ENCODE measurements at regions of chr14 and their contacts with region 1.

Region 1: DNA sequence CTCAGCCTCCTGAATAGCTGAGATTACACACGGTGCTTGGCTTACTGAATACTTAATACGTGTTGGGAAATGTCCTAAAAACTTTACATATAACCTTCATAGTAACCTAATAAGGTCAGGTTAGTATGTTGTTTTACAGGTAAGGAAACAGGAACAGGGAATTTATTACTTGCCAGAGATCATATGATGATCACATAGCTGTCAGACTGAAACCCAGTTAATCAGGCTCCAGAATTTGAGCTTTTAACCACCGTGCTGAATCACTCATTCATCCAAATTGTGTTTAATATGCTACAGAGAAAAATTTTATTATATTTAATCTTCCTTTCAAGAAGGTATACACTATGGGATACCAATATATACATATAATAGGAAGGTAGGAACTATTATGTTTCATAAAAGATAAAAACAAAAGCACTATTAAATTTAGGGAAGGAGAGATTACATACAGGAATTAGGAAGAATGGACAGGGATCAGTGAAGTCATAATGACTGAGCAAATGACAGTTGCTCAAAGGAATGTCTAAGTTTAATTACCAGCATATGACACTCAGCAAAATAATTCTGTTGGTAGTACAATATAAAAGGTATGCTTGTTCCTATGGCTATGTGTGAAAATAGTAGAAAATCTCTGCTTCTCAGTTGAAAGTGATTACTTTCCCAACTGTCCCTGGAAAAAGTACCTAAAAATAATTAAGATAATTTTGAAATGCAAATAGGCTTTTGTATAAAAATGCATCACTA is 59.3 kb downstream of the HEATR5A start:
- DNase-seq: no peak
- CTCF ChIP-seq: no peak

Region 2: GRCh38 chr14:30988509-30988908 is 372.6 kb before region 1 on chr14:
- in situ Hi-C with region 1: loop called (anchors 10 kb)
- DNase-seq: no peak
- CTCF ChIP-seq: no peak